Right cardiac atrium (tissue), 5 donors: ENCODE measurements at regions of chr6 and their contacts with region 1.

Region 1: DNA sequence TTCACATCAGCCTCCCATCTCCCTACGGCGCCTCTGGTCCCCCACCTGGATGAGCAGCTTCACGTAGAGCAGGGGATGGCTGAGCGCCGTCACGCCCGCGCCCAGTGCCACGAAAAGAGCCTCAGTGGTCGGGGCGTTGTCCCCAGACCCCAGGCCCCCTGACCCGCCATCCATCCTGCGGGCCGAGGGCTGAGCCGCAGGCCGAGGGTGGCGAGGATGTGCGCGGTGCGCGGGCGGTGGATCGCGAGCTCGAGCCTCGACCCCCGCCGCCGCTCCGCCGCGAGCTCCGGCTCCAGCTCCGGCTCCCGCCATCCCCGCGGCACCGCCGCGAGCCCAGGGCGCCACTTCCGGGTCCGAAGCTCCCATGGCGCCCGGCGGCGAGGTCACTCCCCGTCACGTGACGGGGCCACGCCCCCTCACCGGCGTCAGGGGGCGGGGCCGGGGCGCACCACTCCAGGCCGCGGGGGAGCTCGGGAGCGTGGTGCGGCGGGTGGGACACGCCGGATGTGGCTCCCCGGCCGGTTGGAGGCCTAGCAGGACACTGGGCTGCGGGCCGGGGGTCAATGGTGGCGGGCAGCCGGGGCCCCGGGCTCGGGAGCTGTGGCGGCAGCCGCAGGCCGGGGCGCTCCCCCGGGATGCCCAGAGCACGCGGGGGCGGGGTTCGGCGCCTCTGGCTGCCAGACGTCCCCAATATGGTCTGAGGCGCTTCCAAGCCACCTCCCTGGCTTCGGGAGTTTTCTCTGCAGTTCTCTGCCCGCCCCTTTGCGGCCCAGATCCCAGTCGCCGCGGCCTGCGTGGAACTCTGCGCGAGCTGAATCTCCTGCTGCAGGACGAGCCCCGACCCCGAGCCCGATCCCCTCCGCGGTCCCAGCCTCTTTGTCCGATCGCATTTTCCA is at the start of gene MTCH1:
- DNase-seq: peak; percentile 92 to 97 (median 96)
- ATAC-seq: peak; percentile 95 to 97
- H3K4me3 ChIP-seq: peak within 1 kb of the TSS; percentile 88
- H3K27ac ChIP-seq: peak within 1 kb of the TSS; percentile 87
- H3K4me1 ChIP-seq: peaks cover 15% of the 10 kb centered on the region
- H3K27me3 ChIP-seq: no peaks in the 10 kb centered on the region
- total RNA-seq, gene MTCH1: 217 to 249 (median 227) TPM

Region 2: GRCh38 chr6:36885461-36886401 is 100.3 kb before region 1 on chr6 and contains the start of gene C6orf89:
- intact Hi-C with region 1: loop called in 2 of 4 experiments (anchors 5 kb)
- DNase-seq: peak; percentile 98 to 99 (median 98)
- ATAC-seq: peak; percentile 99 to 100
- H3K4me3 ChIP-seq: peak within 1 kb of the TSS; percentile 93
- H3K27ac ChIP-seq: peak within 1 kb of the TSS; percentile 96
- H3K4me1 ChIP-seq: no peaks in the 10 kb centered on the region
- H3K27me3 ChIP-seq: no peaks in the 10 kb centered on the region
- total RNA-seq, gene C6orf89: 69.4 to 83.9 (median 79.1) TPM